GM10248 (cell line): ENCODE measurements at regions of chr12 and their contacts with region 1.

Region 1: DNA sequence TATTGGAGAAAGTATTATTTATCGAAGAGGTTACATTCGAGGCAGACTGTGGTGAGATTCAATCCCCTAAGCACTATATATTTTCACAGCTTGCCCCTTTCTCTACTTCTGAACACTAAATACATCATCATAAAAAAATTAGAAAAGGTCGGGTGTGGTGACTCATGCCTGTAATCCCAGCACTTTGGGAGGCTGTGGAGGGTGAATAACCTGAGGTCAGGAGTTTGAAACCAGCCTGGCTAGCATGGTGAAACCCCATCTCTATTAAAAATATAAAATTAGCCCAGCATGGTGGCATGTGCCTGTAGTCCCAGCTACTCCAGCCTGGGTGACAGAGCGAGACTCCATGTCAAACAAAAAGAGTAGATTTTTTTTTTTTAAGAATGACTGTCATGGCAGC is 70.6 kb upstream of the MYF6 start:
- DNase-seq: no peak
- CTCF ChIP-seq: no peak

Region 2: DNA sequence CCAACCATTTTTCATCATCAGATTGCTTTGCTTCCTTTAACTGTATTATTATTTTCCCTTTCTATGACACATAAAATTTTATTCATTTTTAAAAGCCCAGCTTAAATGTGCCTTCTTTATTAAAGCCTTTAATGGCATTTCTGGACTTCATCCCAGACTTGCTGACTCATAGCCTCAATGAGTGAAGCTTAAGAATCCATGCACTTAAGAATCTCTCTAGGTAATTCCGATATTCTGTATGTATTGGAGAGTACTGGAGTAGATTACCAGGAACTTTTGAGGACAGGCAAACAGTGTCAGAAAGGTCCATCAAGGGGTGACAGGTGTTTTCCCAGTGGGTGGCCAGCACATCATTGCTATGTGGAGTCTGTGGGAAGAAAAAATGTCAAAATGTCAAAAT is 84.9 kb before region 1 on chr12:
- CTCF ChIA-PET with region 1: no interaction called
- POLR2A ChIA-PET with region 1: no interaction called
- DNase-seq: no peak
- CTCF ChIP-seq: no peak

Region 3: GRCh38 chr12:80622271-80622670 is 14.6 kb before region 1 on chr12:
- CTCF ChIA-PET with region 1: no interaction called
- POLR2A ChIA-PET with region 1: no interaction called
- DNase-seq: no peak
- CTCF ChIP-seq: no peak

Region 4: DNA sequence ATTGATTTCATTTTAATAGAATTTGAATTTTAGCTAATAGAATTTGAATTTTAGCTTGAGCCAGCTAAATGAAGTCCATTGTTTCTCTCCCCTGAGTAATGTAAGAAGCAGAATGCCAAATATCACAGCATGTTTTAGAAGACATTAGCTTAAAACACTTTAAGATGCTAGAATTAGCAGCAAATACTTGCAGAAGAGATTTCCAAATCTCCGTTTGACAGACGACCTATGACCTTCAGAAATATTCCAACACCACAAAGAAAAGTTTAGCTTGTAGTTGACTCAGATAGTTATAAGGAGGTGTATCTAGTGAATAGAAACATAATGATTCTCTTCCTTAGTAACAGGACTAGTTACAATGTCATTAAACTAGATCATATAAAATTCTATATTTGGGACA is 18.9 kb after region 1 on chr12:
- CTCF ChIA-PET with region 1: interaction called, 11 read pairs
- POLR2A ChIA-PET with region 1: no interaction called
- DNase-seq: no peak
- CTCF ChIP-seq: no peak

Region 5: DNA sequence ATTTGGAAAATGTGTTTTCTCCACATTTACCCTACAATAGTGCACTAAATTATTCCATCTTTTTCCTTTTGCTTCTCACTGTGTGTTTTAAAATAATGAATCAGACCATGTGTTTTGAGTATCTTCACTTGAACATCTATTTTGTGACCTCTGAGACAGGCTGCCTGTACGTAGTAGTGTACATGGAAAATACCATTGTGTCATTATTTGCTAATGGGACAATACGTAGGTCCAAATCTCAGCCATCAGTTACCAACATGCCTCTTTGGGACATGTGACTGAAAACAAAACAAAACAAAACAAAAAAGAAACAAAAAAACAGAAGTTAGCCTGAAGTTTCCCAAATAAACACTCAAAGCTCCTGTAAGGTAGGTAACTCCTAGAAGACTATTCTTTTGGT is 63.5 kb after region 1 on chr12:
- CTCF ChIA-PET with region 1: no interaction called
- POLR2A ChIA-PET with region 1: no interaction called
- DNase-seq: no peak
- CTCF ChIP-seq: no peak